ENCODE measurements at regions of chr14 and their contacts with region 1.

Region 1: GRCh38 chr14:89936658-89937185 is 17.8 kb downstream of the EFCAB11 start:
- DNase-seq: no peak
- H3K4me3 ChIP-seq: no peak overlapping the region
- H3K4me3 Mint-ChIP-seq: no peak overlapping the region
- H3K27ac ChIP-seq: no peak overlapping the region
- H3K27ac Mint-ChIP-seq: no peak overlapping the region
- H3K4me1 ChIP-seq: no peaks in the 10 kb centered on the region
- H3K4me1 Mint-ChIP-seq: peaks cover 0 to 1% (median 0%) of the 10 kb centered on the region in 4 donors
- H3K27me3 ChIP-seq: no peaks in the 10 kb centered on the region
- H3K27me3 Mint-ChIP-seq: no peaks in the 10 kb centered on the region

Region 2: DNA sequence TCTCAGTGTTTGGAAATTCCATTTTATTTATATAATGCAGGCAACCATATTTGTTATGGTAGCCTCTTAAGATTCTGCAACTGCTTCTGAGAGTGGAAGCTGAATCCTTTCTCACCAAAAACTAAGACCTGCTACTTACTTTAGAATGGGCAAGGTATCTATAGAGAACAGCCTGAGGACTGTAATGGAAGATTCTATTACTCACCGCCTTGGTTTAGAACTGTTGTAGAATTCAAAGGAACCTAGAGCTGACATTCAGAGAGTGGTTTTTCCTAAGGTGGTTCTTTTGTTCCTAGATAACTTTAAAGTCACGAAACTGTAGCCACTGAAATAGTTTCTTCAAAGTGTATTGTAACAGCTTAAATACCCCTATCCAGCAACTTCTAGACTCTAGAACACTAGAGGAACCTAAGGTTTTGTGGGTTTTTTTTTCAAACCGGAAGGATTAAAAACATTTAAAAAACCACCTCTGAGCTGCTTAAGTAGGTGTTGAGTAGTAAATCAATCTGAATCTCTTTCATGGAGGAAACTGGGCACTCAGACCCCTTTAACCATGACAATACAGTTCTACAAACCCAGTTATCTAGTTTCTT is 23.2 kb after region 1 on chr14:
- CTCF ChIA-PET with region 1: interaction called, 29 read pairs
- POLR2A ChIA-PET with region 1: interaction called, 5 read pairs
- intact Hi-C with region 1: no loop called
- DNase-seq: peak in 4 of 5 donors; percentile 21 to 46 (median 34)
- H3K4me3 ChIP-seq: no peak overlapping the region
- H3K4me3 Mint-ChIP-seq: peak overlapping the region in 7 of 8 donors; percentile 29 to 71 (median 63)
- H3K27ac ChIP-seq: peak overlapping the region; percentile 1
- H3K27ac Mint-ChIP-seq: peak overlapping the region; percentile 63 to 82 (median 71)
- H3K4me1 ChIP-seq: peaks cover 43% of the 10 kb centered on the region
- H3K4me1 Mint-ChIP-seq: peaks cover 41 to 75% (median 54%) of the 10 kb centered on the region in 4 donors
- H3K27me3 ChIP-seq: no peaks in the 10 kb centered on the region
- H3K27me3 Mint-ChIP-seq: no peaks in the 10 kb centered on the region

Region 3: DNA sequence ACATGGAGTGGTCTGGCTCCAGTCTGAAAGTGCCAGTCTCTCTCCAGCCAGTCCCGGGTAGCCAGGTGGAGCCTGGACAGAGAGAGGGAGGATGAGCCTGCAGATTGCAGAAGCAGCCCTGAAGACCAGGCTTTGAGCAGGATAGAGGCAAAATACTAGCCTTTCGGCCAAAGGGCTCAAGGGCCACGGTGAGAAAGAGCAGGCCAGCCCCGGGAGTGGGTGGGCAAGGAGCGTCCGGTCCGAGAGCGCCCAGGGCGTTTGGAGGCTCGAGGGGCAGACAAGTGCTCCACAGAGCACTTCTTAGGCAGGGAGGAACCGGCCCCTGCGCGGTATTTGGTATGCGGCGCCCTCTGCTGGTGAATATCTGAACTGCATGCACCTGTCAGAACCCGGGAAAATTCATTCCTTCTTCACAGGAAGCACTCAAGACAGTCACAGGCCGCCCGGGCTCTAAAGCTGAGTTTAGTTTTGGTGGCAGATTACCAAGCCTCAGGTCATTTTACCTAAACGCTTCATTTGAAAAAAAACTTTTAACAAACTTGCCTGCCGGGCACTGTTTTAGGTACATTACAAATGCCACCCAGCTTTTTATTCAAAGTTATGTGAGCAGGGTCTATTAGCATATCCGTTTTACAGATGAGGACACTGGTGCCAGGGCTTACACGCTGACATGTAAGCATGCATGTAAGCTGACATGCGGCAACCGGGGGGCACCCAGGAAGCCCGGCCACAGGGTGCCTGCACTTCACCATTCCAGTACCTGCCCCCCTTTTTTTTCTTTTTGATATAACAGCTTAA is 298.7 kb after region 1 on chr14:
- CTCF ChIA-PET with region 1: interaction called, 69 read pairs
- POLR2A ChIA-PET with region 1: interaction called, 4 read pairs
- intact Hi-C with region 1: no loop called
- DNase-seq: peak in 4 of 5 donors; percentile 35 to 51 (median 38)
- H3K4me3 ChIP-seq: no peak overlapping the region
- H3K4me3 Mint-ChIP-seq: peak overlapping the region in 1 of 8 donors; percentile 34
- H3K27ac ChIP-seq: no peak overlapping the region
- H3K27ac Mint-ChIP-seq: no peak overlapping the region
- H3K4me1 ChIP-seq: no peaks in the 10 kb centered on the region
- H3K4me1 Mint-ChIP-seq: peaks cover 0 to 5% (median 0%) of the 10 kb centered on the region in 4 donors
- H3K27me3 ChIP-seq: no peaks in the 10 kb centered on the region
- H3K27me3 Mint-ChIP-seq: peaks cover 8 to 12% of the 10 kb centered on the region in 2 donors